Calu3 (cell line): ENCODE measurements at regions of chr3 and their contacts with region 1.

Region 1: DNA sequence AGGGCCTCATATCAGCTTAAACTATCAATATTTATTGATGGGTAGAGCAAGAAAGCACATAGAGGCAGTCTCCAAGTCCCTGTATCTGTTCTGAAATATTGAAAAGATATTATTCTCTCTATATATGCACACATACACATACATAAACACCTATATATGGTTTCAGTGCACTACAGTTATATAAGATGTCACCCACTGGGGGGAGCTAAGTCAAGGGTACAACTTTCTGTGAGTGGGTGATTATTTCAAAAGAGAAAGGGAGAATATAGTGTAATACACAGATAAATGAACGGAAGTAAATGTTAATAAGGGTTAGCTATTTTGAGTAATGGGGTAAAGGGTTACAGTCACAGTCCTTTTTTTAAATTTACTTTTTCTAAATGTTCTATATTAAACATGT is 8.8 kb downstream of the SNTN start:
- DNase-seq: peak; percentile 23
- H3K4me3 Mint-ChIP-seq: no peak overlapping the region
- H3K27ac Mint-ChIP-seq: no peak overlapping the region
- H3K4me1 Mint-ChIP-seq: peaks cover 1% of the 10 kb centered on the region
- H3K27me3 Mint-ChIP-seq: no peaks in the 10 kb centered on the region
- CTCF ChIP-seq: no peak

Region 2: DNA sequence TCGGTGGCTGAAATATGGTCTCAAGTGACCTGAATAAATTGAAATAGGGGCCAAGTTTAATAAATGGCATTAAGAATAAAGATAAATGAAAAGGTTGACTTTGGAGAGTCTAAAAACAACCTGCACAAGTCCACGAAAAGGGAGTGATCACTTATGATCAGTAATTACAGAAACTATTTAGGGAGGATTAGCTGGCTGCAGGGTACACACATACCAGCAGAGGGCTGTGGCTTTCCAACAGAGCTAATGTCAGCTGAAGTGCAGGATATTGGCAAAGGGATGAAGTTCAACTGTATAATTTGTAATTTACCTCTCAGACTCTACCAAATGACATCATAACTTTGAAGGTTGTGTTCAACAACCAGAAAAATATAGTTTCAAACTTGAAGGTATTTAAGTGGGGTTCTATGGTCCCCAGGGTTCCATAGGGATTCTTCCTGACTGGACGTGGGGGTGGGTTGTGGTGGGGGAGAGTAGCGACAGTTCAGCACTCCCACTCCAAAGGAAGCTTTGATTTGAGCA is 296.3 kb before region 1 on chr3:
- CTCF ChIA-PET with region 1: interaction called, 11 read pairs
- intact Hi-C with region 1: loop called (anchors 2 kb)
- DNase-seq: peak; percentile 28
- H3K4me3 Mint-ChIP-seq: no peak overlapping the region
- H3K27ac Mint-ChIP-seq: no peak overlapping the region
- H3K4me1 Mint-ChIP-seq: peaks cover 8% of the 10 kb centered on the region
- H3K27me3 Mint-ChIP-seq: peaks cover 24% of the 10 kb centered on the region
- CTCF ChIP-seq: peak; percentile 23

Region 3: GRCh38 chr3:63679186-63679585 is 17.9 kb after region 1 on chr3:
- CTCF ChIA-PET with region 1: no interaction called
- intact Hi-C with region 1: no loop called
- DNase-seq: no peak
- H3K4me3 Mint-ChIP-seq: no peak overlapping the region
- H3K27ac Mint-ChIP-seq: no peak overlapping the region
- H3K4me1 Mint-ChIP-seq: no peaks in the 10 kb centered on the region
- H3K27me3 Mint-ChIP-seq: no peaks in the 10 kb centered on the region
- CTCF ChIP-seq: no peak

Region 4: GRCh38 chr3:63791974-63792545 is 130.8 kb after region 1 on chr3:
- CTCF ChIA-PET with region 1: interaction called, 3 read pairs
- intact Hi-C with region 1: loop called (anchors 5 kb)
- DNase-seq: peak; percentile 9
- H3K4me3 Mint-ChIP-seq: no peak overlapping the region
- H3K27ac Mint-ChIP-seq: no peak overlapping the region
- H3K4me1 Mint-ChIP-seq: no peaks in the 10 kb centered on the region
- H3K27me3 Mint-ChIP-seq: no peaks in the 10 kb centered on the region
- CTCF ChIP-seq: peak; percentile 35

Region 5: GRCh38 chr3:64475037-64475436 is 813.8 kb after region 1 on chr3:
- CTCF ChIA-PET with region 1: no interaction called
- intact Hi-C with region 1: no loop called
- DNase-seq: no peak
- H3K4me3 Mint-ChIP-seq: no peak overlapping the region
- H3K27ac Mint-ChIP-seq: no peak overlapping the region
- H3K4me1 Mint-ChIP-seq: no peaks in the 10 kb centered on the region
- H3K27me3 Mint-ChIP-seq: peaks cover 77% of the 10 kb centered on the region
- CTCF ChIP-seq: no peak